ENCODE measurements at regions of chr3 and their contacts with region 1.

Region 1: DNA sequence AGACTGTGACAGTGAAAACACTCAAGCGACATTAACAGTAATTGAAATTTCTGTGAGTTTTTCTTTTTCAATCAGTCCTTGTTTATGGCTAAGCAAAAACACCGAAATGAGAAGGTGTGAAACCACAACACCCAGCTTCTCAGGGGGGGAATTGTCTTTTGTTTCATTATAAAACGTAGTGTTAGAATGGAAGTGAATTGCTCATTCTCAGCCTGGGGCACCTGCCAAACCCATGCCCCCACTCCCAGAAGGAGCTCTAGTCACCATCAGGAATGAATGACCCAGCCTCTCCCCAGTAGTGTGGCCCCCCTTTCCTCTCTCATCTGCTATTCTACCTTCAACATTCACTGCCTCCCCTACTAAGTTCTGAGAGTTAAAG is 185.8 kb upstream of the CFAP20DC start:
- DNase-seq: peak; percentile 37
- H3K4me3 Mint-ChIP-seq: peak overlapping the region; percentile 58
- H3K27ac Mint-ChIP-seq: peak overlapping the region; percentile 27
- H3K4me1 Mint-ChIP-seq: peaks cover 29% of the 10 kb centered on the region
- H3K27me3 Mint-ChIP-seq: peaks cover 6% of the 10 kb centered on the region

Region 2: DNA sequence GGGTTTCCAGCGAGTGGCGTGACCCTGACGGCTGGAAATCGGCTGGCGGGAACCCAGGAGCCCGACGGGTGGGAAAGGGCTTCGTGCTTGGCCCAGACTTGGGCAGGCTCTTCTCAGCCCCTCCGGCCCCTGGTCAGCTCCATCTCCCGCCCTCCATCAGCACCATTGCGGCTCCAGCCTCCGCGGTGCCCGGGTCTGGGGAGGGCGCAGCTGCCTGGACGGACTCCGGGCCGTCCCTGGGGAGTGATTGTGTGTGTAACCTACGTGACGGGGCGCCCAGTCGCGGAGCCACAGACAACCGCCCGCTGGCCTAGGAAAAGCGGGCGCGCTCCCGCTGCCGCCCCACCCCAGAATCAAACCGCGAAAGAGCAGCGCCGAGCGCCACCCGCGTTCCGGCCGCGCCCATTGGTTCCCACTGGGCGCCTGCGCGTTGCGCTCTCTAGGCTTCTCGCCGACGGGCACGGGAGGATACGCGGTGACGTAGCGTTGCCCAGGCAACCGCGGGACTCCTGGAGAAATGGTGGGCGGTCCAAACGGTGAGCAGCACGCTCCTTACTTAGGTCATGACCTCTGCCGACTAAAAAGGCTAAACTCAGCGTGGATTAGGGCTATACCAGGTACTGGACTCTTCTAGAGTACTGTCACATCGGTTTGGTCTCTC is 185.8 kb before region 1 on chr3 and contains the start of gene CFAP20DC:
- intact Hi-C with region 1: loop called (anchors 5 kb)
- DNase-seq: peak; percentile 90
- H3K4me3 Mint-ChIP-seq: peak within 1 kb of the TSS; percentile 65
- H3K27ac Mint-ChIP-seq: peak within 1 kb of the TSS; percentile 67
- H3K4me1 Mint-ChIP-seq: peaks cover 15% of the 10 kb centered on the region
- H3K27me3 Mint-ChIP-seq: peaks cover 14% of the 10 kb centered on the region
- total RNA-seq, gene CFAP20DC: 0.86 and 1.2 TPM in 2 replicates

Region 3: GRCh38 chr3:59286791-59287531 is 51.3 kb after region 1 on chr3:
- intact Hi-C with region 1: loop called (anchors 1 kb)
- DNase-seq: peak; percentile 29
- H3K4me3 Mint-ChIP-seq: peak overlapping the region; percentile 1
- H3K27ac Mint-ChIP-seq: peak overlapping the region; percentile 91
- H3K4me1 Mint-ChIP-seq: peaks cover 37% of the 10 kb centered on the region
- H3K27me3 Mint-ChIP-seq: no peaks in the 10 kb centered on the region

Region 4: DNA sequence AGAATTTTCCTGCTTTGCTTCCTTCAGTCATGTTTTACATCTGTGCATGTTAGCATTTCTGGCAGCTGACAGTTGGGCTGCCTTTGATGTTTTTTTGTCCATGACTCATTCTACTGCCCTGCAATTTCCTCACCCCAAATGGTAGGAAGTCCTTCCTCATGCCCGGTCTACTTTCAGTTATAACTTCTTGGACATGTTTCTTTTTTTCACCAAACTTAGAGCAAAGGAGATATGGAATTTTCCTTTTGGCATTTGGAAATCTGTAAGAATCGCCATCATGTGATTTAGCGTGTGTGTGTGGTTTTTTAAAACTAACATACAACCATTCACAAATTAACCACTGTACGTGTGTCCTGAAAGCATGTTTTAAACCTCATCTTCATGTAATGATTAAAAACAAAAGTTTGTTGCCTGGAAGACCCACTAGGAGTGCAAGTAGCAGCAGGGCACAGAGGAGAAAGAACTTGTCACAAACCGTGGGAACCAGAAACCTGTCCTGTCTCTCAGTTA is 244.9 kb after region 1 on chr3:
- intact Hi-C with region 1: loop called (anchors 1 kb)
- DNase-seq: no peak
- H3K4me3 Mint-ChIP-seq: peak overlapping the region; percentile 52
- H3K27ac Mint-ChIP-seq: peak overlapping the region; percentile 72
- H3K4me1 Mint-ChIP-seq: peaks cover 41% of the 10 kb centered on the region
- H3K27me3 Mint-ChIP-seq: no peaks in the 10 kb centered on the region

Region 5: GRCh38 chr3:59514865-59515482 is 279.4 kb after region 1 on chr3:
- intact Hi-C with region 1: no loop called
- DNase-seq: no peak
- H3K4me3 Mint-ChIP-seq: no peak overlapping the region
- H3K27ac Mint-ChIP-seq: no peak overlapping the region
- H3K4me1 Mint-ChIP-seq: no peaks in the 10 kb centered on the region
- H3K27me3 Mint-ChIP-seq: peaks cover 8% of the 10 kb centered on the region

Region 6: GRCh38 chr3:59726279-59726678 is 490.7 kb after region 1 on chr3:
- intact Hi-C with region 1: loop called (anchors 1 kb)
- DNase-seq: peak; percentile 9
- H3K4me3 Mint-ChIP-seq: no peak overlapping the region
- H3K27ac Mint-ChIP-seq: no peak overlapping the region
- H3K4me1 Mint-ChIP-seq: peaks cover 26% of the 10 kb centered on the region
- H3K27me3 Mint-ChIP-seq: peaks cover 5% of the 10 kb centered on the region